Dendritic cell treated with granulocyte-macrophage colony-stimulating factor and Interleukin-4, amounts not matched to agents 40 ng/mL and 50 ng/mL, for 4 days (primary cell): ENCODE measurements at regions of chr10 and their contacts with region 1.

Region 1: DNA sequence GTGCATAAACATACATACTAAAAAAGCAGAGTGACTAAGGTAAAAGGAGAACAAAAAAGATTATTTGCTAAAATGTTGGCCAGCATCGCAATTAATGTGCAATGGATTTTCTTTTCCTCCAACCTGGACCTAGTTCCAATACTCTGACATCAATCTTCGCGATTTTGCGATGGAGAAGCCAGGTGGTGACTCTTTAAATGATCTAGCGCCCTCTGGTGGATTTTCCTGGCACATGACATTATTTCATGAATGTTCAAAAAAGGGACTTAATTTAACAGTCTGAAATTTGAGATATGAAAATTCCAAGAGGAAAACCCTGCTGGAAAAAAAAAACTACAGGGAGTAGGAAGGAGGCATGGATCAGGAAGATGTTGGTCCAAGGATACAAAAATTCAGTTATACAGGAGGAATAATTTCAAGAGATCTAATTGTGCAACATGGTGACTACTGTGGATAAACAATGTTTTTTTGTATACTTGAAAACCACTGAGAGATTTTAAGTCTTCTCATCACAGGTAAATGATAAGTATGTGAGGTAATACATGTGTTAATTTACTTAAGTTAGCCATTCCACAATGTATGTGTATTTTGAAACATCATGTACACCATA is 4.3 kb upstream of the KCNMA1 start:
- H3K4me3 Mint-ChIP-seq: no peak overlapping the region
- H3K27ac Mint-ChIP-seq: no peak overlapping the region
- H3K4me1 Mint-ChIP-seq: peaks cover 13% of the 10 kb centered on the region
- H3K27me3 Mint-ChIP-seq: peaks cover 48% of the 10 kb centered on the region

Region 2: DNA sequence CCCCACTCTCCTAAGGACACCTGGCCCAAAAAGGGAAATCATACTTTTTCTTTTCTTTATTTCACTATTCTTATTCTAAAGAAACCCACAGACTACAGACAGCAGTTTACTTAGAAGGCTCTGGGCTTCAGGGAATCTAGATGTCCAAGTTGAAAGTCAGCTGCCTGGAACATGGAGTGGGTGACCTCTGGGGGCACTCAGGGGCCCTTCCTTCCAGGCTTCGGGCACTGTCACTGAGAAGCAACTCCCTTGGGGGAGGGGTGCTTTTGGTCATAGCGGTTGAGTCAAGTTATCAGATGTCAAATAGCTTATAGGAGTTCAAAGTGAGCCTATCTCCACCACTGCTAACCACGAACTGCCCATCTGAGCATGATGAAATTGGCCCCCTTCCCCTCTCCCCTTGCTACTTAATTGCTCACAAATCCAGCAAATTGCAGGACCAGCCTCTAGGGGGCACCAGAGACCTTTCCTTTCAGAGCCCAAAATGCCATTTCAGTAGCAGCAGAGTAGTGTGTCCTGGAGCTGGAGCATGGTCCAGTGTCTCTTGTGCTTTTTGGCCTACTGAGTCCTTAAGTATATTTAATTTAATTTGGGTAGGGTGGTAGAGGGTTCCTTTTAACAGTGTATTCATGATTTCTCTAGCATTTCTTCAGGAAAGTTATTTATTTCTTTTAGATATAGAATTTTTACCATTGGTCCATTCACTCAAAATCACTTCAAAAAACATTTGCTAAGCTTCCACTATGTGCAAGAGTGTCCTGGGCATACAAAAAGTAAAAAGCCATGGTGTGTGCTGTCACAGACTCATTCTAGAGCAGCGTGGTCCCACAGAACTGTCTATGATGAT is 468.1 kb before region 1 on chr10:
- intact Hi-C with region 1: loop called (anchors 1 kb)
- H3K4me3 Mint-ChIP-seq: no peak overlapping the region
- H3K27ac Mint-ChIP-seq: no peak overlapping the region
- H3K4me1 Mint-ChIP-seq: no peaks in the 10 kb centered on the region
- H3K27me3 Mint-ChIP-seq: peaks cover 2% of the 10 kb centered on the region

Region 3: DNA sequence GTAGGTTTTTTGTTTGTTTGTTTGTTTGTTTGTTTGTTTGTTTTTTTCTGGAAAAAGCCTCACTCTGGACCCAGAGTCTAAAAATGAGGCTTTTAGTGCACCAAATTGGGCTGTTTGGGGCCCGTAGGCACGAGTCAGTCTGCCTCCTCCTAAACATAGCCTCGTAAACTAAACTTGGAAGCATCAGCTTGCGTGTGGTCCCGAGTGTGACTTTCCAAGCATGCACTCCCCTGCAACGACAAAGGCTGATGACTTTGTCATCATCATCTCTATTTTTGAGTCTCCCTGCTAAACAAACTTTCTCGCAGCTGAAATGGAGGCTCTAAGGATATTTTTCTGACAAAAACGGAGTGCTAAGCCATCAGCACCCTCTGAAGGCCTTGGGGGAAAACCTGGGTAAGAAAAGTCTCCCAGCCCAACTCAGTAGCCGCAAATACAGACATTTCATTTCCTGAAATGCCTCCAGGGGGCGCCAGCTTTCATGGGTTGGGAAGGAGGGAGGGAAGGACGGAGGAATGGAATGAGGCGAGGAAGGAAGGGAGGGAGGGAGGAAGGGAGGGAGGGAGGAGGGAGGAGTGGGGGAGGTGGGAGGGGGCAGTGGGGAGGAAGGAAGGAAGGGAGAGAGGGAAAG is 250.2 kb before region 1 on chr10:
- intact Hi-C with region 1: loop called (anchors 1 kb)
- H3K4me3 Mint-ChIP-seq: no peak overlapping the region
- H3K27ac Mint-ChIP-seq: no peak overlapping the region
- H3K4me1 Mint-ChIP-seq: peaks cover 3% of the 10 kb centered on the region
- H3K27me3 Mint-ChIP-seq: peaks cover 30% of the 10 kb centered on the region

Region 4: GRCh38 chr10:77456414-77456813 is 185.5 kb before region 1 on chr10:
- intact Hi-C with region 1: loop called (anchors 10 kb)
- H3K4me3 Mint-ChIP-seq: no peak overlapping the region
- H3K27ac Mint-ChIP-seq: no peak overlapping the region
- H3K4me1 Mint-ChIP-seq: no peaks in the 10 kb centered on the region
- H3K27me3 Mint-ChIP-seq: peaks cover 13% of the 10 kb centered on the region

Region 5: DNA sequence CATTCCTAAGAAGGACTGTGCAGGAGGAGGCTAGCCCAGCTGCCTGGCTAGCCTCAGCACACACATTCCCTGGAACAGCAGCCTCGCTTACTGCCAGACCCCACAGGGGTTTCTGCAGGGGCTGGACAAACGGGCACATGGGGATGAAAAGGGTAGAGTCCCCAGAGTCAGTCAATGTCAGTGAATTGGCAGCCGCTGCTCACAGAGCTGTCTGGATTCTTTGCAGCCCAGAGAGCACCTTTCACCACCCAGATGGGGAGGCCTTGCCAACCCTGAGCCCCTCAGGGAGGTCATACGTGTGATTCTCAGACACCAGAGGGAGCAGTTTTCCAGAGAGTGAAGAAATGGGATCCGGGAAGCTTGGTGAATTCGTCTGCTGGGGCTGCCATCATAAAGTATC is 147.6 kb before region 1 on chr10:
- intact Hi-C with region 1: loop called (anchors 10 kb)
- H3K4me3 Mint-ChIP-seq: no peak overlapping the region
- H3K27ac Mint-ChIP-seq: no peak overlapping the region
- H3K4me1 Mint-ChIP-seq: peaks cover 4% of the 10 kb centered on the region
- H3K27me3 Mint-ChIP-seq: peaks cover 15% of the 10 kb centered on the region

Region 6: GRCh38 chr10:77513781-77514331 is 128.0 kb before region 1 on chr10:
- intact Hi-C with region 1: loop called (anchors 10 kb)
- H3K4me3 Mint-ChIP-seq: no peak overlapping the region
- H3K27ac Mint-ChIP-seq: no peak overlapping the region
- H3K4me1 Mint-ChIP-seq: no peaks in the 10 kb centered on the region
- H3K27me3 Mint-ChIP-seq: peaks cover 8% of the 10 kb centered on the region